GM12878 (cell line): ENCODE measurements at regions of chr3 and their contacts with region 1.

Region 1: GRCh38 chr3:114400371-114400770 is 106.5 kb downstream of the TIGIT start:
- DNase-seq: no peak
- ATAC-seq: no peak
- H3K4me3 ChIP-seq: no peak overlapping the region
- H3K27ac ChIP-seq: no peak overlapping the region
- H3K4me1 ChIP-seq: peaks cover 3% of the 10 kb centered on the region; the same call in 1 of the 2 replicates
- H3K27me3 ChIP-seq: no peaks in the 10 kb centered on the region
- CTCF ChIP-seq: no peak
- EP300 ChIP-seq: no peak
- POLR2A ChIP-seq: no peak
- RAD21 ChIP-seq: no peak

Region 2: DNA sequence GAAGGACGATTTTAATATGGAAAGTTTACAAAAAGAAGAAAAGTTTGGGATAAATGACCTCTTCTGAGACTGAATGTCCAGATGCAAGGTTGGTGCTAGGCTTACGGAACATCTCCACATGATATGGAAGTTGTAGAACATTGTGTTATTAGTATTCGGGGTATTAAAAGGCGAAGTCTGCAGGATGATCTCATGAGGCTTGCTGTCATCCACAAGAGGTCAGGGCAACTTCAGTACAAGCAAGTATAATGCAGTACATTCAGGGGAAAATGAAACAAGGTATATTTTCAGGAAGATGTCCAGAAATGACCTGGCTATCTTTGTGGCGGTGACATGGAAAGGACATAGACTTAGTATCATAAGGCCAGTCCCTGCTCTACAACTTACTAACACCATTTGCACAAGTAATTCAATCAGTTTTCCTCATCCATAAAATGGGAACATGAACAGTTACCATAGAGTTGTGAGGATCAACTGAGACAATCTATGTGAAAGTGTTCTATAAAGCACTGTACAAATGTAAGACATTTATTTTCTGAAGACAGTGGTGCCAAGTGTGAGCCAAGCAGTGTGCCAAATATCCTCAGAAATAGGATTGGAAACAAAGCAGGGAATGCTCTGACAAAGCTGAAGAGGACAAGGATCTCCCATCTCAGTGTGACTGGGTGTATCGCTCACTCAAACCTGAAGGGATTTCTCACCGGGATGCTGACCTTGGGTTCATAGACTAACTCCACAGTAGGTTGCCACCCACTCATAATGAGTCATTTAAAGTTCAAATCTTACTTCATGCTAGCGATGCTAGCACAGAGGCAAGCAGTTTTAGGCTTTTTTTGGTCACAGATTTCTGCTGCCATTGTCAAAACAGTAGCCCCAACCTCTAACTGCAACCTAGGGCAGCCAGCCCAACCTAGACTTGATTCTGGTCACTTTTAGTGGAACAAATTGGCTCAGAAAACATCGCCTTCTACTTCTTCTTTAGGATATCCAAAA is 11.7 kb after region 1 on chr3:
- CTCF ChIA-PET with region 1: interaction called, 6 read pairs
- POLR2A ChIA-PET with region 1: interaction called, 3 read pairs
- RAD21 ChIA-PET with region 1: interaction called, 3 read pairs
- SMC1A ChIA-PET with region 1: interaction called, 33 read pairs
- in situ Hi-C with region 1: no loop called
- intact Hi-C with region 1: no loop called
- DNase-seq: no peak
- ATAC-seq: peak; percentile 72
- H3K4me3 ChIP-seq: peak overlapping the region; percentile 41; the same call in 1 of the 2 replicates
- H3K27ac ChIP-seq: no peak overlapping the region
- H3K4me1 ChIP-seq: peaks cover 9% of the 10 kb centered on the region
- H3K27me3 ChIP-seq: no peaks in the 10 kb centered on the region
- CTCF ChIP-seq: peak in 1 of 3 experiments; percentile 34; a peak in 2 of 6 replicates
- EP300 ChIP-seq: no peak
- POLR2A ChIP-seq: no peak
- RAD21 ChIP-seq: peak; percentile 33; the same call in 1 of the 2 replicates